ENCODE measurements at regions of chr19 and their contacts with region 1.

Region 1: GRCh38 chr19:11597202-11598102 is at the start of gene ZNF627:
- DNase-seq: peak; percentile 93 to 98
- H3K4me3 ChIP-seq: peak within 1 kb of the TSS; percentile 80 to 97 (median 85)
- H3K27ac ChIP-seq: peak within 1 kb of the TSS; percentile 100
- H3K4me1 ChIP-seq: peaks cover 0 to 6% (median 3%) of the 10 kb centered on the region in 4 experiments; a peak in 3 of 7 replicates
- H3K27me3 ChIP-seq: no peaks in the 10 kb centered on the region
- CTCF ChIP-seq: peak; percentile 12 to 29 (median 20); a peak in 3 of 4 replicates
- EP300 ChIP-seq: 0 out of 3 replicates have a peak, but pooled peaks of 1 of the 2 experiments have one; percentile 23
- POLR2A ChIP-seq: peak; percentile 92 to 98
- RAD21 ChIP-seq: 0 out of 4 replicates have a peak, but pooled peaks of 1 of the 2 experiments have one; percentile 9
- total RNA-seq, gene ZNF627: 13.7 and 15.8 TPM in 2 replicates

Region 2: DNA sequence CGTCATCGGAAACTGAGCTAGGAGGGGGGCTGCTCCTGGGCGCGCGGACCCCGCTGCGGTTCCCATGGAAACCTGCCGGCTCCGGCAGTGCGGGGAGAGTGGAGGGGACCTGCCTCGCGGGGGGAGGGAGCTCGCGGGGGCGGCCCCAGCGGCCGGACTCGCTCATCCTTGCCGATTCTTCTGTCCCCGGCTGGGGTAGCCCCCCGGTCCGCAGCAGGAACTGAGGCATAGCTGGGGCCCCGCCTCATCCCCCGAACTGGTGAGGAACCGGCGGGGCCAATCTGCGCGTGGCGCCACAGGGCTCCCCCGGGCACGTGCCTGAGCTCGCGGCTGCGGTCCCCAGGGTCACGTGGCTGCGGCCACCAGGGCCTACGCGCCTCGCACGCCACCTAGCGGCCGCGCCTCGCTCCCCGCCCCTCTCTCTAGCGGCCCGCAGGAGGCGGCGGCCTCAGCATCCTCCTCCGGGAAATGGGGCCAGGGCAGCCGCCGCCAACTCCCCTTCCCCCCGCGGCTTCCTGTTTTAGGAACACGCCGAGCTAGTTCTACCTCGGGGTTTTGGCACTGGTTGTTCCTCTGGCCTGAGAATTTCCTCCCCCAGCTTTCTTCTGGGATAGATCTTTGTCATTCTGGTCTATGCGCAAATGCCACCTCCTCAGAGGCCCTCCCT is 114.9 kb before region 1 on chr19:
- CTCF ChIA-PET with region 1: no interaction called
- POLR2A ChIA-PET with region 1: no interaction called
- DNase-seq: peak; percentile 53 to 95
- H3K4me3 ChIP-seq: peak overlapping the region; percentile 0 to 56 (median 9); a peak in 2 of 8 replicates
- H3K27ac ChIP-seq: no peak overlapping the region
- H3K4me1 ChIP-seq: peaks cover 0 to 17% (median 5%) of the 10 kb centered on the region in 4 experiments; a peak in 5 of 7 replicates
- H3K27me3 ChIP-seq: peaks cover 20 to 26% (median 23%) of the 10 kb centered on the region in 4 experiments
- CTCF ChIP-seq: peak; percentile 93 to 97 (median 96)
- EP300 ChIP-seq: peak in 1 of 2 experiments; percentile 53; a peak in 1 of 3 replicates
- POLR2A ChIP-seq: 0 out of 3 replicates have a peak, but pooled peaks of 1 of the 2 experiments have one; percentile 17
- RAD21 ChIP-seq: peak; percentile 86 to 87

Region 3: GRCh38 chr19:11578258-11579142 is 19.0 kb before region 1 on chr19:
- CTCF ChIA-PET with region 1: interaction called, 3 read pairs
- POLR2A ChIA-PET with region 1: interaction called, 16 read pairs
- DNase-seq: peak in 1 of 2 experiments; percentile 73
- H3K4me3 ChIP-seq: peak overlapping the region; percentile 30 to 66 (median 64)
- H3K27ac ChIP-seq: no peak overlapping the region
- H3K4me1 ChIP-seq: peaks cover 0 to 10% (median 6%) of the 10 kb centered on the region in 4 experiments; a peak in 4 of 7 replicates
- H3K27me3 ChIP-seq: peaks cover 0 to 10% (median 6%) of the 10 kb centered on the region in 4 experiments; a peak in 5 of 7 replicates
- CTCF ChIP-seq: no peak
- EP300 ChIP-seq: peak in 1 of 2 experiments; percentile 71; a peak in 1 of 3 replicates
- POLR2A ChIP-seq: peak in 1 of 2 experiments; percentile 36; a peak in 1 of 3 replicates
- RAD21 ChIP-seq: no peak

Region 4: GRCh38 chr19:11612816-11613511 is 15.5 kb after region 1 on chr19:
- CTCF ChIA-PET with region 1: interaction called, 5 read pairs
- POLR2A ChIA-PET with region 1: interaction called, 10 read pairs
- DNase-seq: no peak
- H3K4me3 ChIP-seq: no peak overlapping the region
- H3K27ac ChIP-seq: no peak overlapping the region
- H3K4me1 ChIP-seq: no peaks in the 10 kb centered on the region
- H3K27me3 ChIP-seq: no peaks in the 10 kb centered on the region
- CTCF ChIP-seq: peak in 2 of 3 experiments; percentile 8 to 33; a peak in 1 of 4 replicates
- EP300 ChIP-seq: no peak
- POLR2A ChIP-seq: no peak
- RAD21 ChIP-seq: no peak; a peak in 1 of 4 replicates

Region 5: GRCh38 chr19:11708457-11708856 is 111.0 kb after region 1 on chr19:
- CTCF ChIA-PET with region 1: no interaction called
- POLR2A ChIA-PET with region 1: no interaction called
- DNase-seq: no peak
- H3K4me3 ChIP-seq: no peak overlapping the region
- H3K27ac ChIP-seq: no peak overlapping the region
- H3K4me1 ChIP-seq: no peaks in the 10 kb centered on the region
- H3K27me3 ChIP-seq: no peaks in the 10 kb centered on the region
- CTCF ChIP-seq: no peak
- EP300 ChIP-seq: no peak
- POLR2A ChIP-seq: no peak
- RAD21 ChIP-seq: no peak